ENCODE measurements at regions of chr19 and their contacts with region 1.

Region 1: DNA sequence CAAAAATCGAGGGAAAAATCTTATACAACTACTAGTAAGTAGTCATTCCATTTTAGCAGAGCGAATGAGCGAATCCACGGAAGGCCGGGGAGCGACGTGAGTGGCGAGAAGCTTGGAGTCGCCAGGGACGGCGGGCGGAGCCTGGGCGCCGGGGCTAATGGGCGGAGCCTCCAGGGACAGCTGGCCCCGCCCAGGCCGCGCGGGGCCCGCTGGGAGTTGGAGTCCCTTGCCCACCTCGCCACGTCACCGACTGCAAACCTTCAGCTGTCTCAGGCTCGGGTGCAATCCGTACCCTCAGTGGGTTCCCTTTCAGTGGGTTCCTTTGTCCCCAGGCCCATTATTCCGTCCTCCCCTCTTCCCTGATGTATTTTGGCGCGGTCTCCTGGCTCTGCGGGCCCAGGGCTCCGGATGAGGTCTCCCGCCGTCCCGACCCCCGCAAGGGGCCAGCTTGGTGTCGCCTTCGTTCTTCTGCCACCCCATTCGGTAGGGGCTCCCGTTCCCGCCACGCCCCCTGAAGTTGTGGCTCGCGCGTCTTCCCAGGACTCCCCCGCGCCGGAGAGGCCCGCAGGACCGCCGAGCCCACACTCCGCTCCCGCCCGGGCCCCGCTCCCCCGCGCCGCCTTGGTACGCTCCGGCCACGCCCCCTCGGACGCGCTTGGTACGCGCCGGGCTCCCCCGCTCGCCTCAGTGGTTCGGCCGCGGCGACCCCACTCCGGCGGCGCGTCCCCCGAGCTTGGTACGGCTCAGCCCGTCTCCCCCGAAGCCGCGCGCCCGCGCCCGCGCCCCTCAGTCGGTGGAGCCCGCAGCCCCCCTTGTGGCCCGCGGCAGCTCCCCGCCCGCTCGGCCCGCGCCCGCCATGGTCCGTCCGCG is at the start of gene PTOV1:
- DNase-seq: peak; percentile 89 to 91
- H3K4me3 ChIP-seq: peak within 1 kb of the TSS; percentile 41 to 99 (median 81)
- H3K27ac ChIP-seq: peak within 1 kb of the TSS; percentile 98 to 100 (median 99)
- H3K4me1 ChIP-seq: peaks cover 20% of the 10 kb centered on the region in 2 donors
- H3K27me3 ChIP-seq: no peaks in the 10 kb centered on the region
- CTCF ChIP-seq: no peak
- POLR2A ChIP-seq: peak in 1 of 2 donors; percentile 81
- total RNA-seq, gene PTOV1: 88.3 to 148 (median 98.9) TPM

Region 2: DNA sequence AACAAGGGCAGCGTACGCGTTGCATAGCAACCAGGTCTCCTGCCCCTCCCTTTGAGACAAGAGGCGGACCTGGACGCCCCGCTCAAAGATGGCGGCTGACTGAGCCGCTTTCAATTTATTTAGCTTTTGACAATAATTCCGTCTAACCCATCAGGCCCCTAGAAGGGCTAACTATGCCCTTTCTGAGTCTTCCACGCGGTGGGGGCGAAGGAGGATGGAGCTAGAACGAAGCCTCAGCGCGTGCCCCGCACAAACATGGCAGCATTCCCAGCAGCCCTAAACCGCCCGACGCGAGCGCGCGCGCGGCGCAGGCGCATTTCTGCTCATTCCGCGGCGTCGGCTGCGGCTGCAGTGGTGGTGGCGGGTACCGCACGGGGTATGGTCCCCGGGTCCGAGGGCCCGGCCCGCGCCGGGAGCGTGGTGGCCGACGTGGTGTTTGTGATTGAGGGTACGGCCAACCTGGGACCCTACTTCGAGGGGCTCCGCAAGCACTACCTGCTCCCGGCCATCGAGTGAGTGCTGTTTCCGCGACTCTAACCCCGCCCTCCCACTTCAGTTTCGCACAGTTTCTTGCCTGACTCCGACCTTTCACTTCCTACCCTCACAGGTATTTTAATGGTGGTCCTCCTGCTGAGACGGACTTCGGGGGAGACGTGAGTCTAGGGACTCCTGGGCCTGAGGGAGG is 32.6 kb before region 1 on chr19 and contains the start of gene MED25:
- intact Hi-C with region 1: loop called (anchors 5 kb)
- DNase-seq: peak; percentile 79 to 81
- H3K4me3 ChIP-seq: peak within 1 kb of the TSS; percentile 61 to 70 (median 64)
- H3K27ac ChIP-seq: peak within 1 kb of the TSS; percentile 85 to 97 (median 92)
- H3K4me1 ChIP-seq: peaks cover 31 to 35% of the 10 kb centered on the region in 2 donors
- H3K27me3 ChIP-seq: no peaks in the 10 kb centered on the region
- CTCF ChIP-seq: peak in 5 of 6 experiments; percentile 22 to 68 (median 33)
- POLR2A ChIP-seq: peak; percentile 79 to 80
- total RNA-seq, gene MED25: 42.6 to 50.2 (median 44.9) TPM

Region 3: GRCh38 chr19:49896863-49897621 is 46.3 kb after region 1 on chr19 and contains the start of gene IL4I1:
- intact Hi-C with region 1: no loop called
- DNase-seq: no peak
- H3K4me3 ChIP-seq: no peak within 1 kb of the TSS
- H3K27ac ChIP-seq: no peak within 1 kb of the TSS
- H3K4me1 ChIP-seq: peaks cover 0 to 11% of the 10 kb centered on the region in 2 donors
- H3K27me3 ChIP-seq: no peaks in the 10 kb centered on the region
- CTCF ChIP-seq: no peak
- POLR2A ChIP-seq: no peak
- total RNA-seq, gene IL4I1: 0.83 TPM in 1 of 4 donors, not detected in the others

Measured in thyroid gland (tissue), 4 donors.